CD14-positive monocyte (primary cell): ENCODE measurements at regions of chr9 and their contacts with region 1.

Region 1: GRCh38 chr9:130107234-130107861 is 53.6 kb downstream of the GPR107 start:
- DNase-seq: peak; percentile 50 to 78 (median 71)
- H3K4me3 ChIP-seq: no peak overlapping the region
- H3K4me3 Mint-ChIP-seq: no peak overlapping the region
- H3K27ac ChIP-seq: peak overlapping the region in 1 of 2 donors; percentile 21
- H3K27ac Mint-ChIP-seq: peak overlapping the region in 3 of 7 donors; percentile 16 to 82 (median 66)
- H3K4me1 ChIP-seq: peaks cover 0 to 2% of the 10 kb centered on the region in 2 donors
- H3K4me1 Mint-ChIP-seq: peaks cover 12% of the 10 kb centered on the region
- H3K27me3 ChIP-seq: no peaks in the 10 kb centered on the region
- H3K27me3 Mint-ChIP-seq: peaks cover 0 to 2% (median 2%) of the 10 kb centered on the region in 3 donors
- CTCF ChIP-seq: peak; percentile 81

Region 2: DNA sequence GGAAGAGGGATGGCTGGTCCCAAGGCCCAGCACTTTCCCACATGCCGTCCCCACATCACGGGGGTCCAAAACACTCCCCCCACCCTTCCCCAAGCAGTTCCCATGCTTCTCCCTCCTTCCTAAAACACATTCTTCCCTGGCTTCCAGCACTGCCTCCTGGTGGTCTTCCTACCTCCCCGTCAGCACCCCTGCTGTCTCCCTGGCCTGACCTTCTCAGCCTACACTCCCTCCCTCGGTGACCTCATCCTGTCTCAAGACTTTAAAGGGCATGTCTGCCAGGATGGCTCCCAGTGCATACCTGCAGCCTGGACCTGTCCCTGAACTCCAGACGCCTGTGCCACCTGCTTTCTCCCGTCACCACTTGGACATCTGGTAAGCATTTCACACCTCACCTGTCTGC is 60.6 kb after region 1 on chr9:
- intact Hi-C with region 1: loop called in 1 of 2 experiments (anchors 10 kb)
- DNase-seq: no peak
- H3K4me3 ChIP-seq: no peak overlapping the region
- H3K4me3 Mint-ChIP-seq: no peak overlapping the region
- H3K27ac ChIP-seq: no peak overlapping the region
- H3K27ac Mint-ChIP-seq: no peak overlapping the region
- H3K4me1 ChIP-seq: peaks cover 0 to 3% of the 10 kb centered on the region in 2 donors
- H3K4me1 Mint-ChIP-seq: no peaks in the 10 kb centered on the region
- H3K27me3 ChIP-seq: peaks cover 10 to 21% of the 10 kb centered on the region in 2 donors
- H3K27me3 Mint-ChIP-seq: peaks cover 26 to 49% (median 29%) of the 10 kb centered on the region in 3 donors
- CTCF ChIP-seq: no peak

Region 3: GRCh38 chr9:130235897-130236668 is 128.7 kb after region 1 on chr9:
- intact Hi-C with region 1: loop called (anchors 1 kb)
- DNase-seq: peak; percentile 45 to 67 (median 60)
- H3K4me3 ChIP-seq: no peak overlapping the region
- H3K4me3 Mint-ChIP-seq: peak overlapping the region in 1 of 2 donors; percentile 62
- H3K27ac ChIP-seq: no peak overlapping the region
- H3K27ac Mint-ChIP-seq: no peak overlapping the region
- H3K4me1 ChIP-seq: peaks cover 5 to 11% of the 10 kb centered on the region in 2 donors
- H3K4me1 Mint-ChIP-seq: peaks cover 13% of the 10 kb centered on the region
- H3K27me3 ChIP-seq: no peaks in the 10 kb centered on the region
- H3K27me3 Mint-ChIP-seq: peaks cover 3% of the 10 kb centered on the region in 3 donors
- CTCF ChIP-seq: peak; percentile 100